ENCODE measurements at regions of chr4 and their contacts with region 1.

Region 1: GRCh38 chr4:51831133-51831532 is 11.8 kb upstream of the DCUN1D4 start:
- DNase-seq: peak; percentile 69 to 72
- H3K4me3 ChIP-seq: no peak overlapping the region
- H3K27ac ChIP-seq: no peak overlapping the region
- H3K4me1 ChIP-seq: no peaks in the 10 kb centered on the region
- H3K27me3 ChIP-seq: peaks cover 0 to 6% of the 10 kb centered on the region in 2 donors
- CTCF ChIP-seq: peak; percentile 62 to 64

Region 2: GRCh38 chr4:52028969-52029368 is 197.8 kb after region 1 on chr4:
- intact Hi-C with region 1: loop called (anchors 2 kb)
- DNase-seq: no peak
- H3K4me3 ChIP-seq: no peak overlapping the region
- H3K27ac ChIP-seq: no peak overlapping the region
- H3K4me1 ChIP-seq: peaks cover 0 to 14% (median 6%) of the 10 kb centered on the region in 4 donors
- H3K27me3 ChIP-seq: no peaks in the 10 kb centered on the region
- CTCF ChIP-seq: no peak

Region 3: GRCh38 chr4:52135171-52135570 is 304.0 kb after region 1 on chr4:
- intact Hi-C with region 1: no loop called
- DNase-seq: no peak
- H3K4me3 ChIP-seq: no peak overlapping the region
- H3K27ac ChIP-seq: no peak overlapping the region
- H3K4me1 ChIP-seq: no peaks in the 10 kb centered on the region
- H3K27me3 ChIP-seq: no peaks in the 10 kb centered on the region
- CTCF ChIP-seq: no peak